Naive thymus-derived CD4-positive, alpha-beta T cell (primary cell): ENCODE measurements at regions of chr11 and their contacts with region 1.

Region 1: DNA sequence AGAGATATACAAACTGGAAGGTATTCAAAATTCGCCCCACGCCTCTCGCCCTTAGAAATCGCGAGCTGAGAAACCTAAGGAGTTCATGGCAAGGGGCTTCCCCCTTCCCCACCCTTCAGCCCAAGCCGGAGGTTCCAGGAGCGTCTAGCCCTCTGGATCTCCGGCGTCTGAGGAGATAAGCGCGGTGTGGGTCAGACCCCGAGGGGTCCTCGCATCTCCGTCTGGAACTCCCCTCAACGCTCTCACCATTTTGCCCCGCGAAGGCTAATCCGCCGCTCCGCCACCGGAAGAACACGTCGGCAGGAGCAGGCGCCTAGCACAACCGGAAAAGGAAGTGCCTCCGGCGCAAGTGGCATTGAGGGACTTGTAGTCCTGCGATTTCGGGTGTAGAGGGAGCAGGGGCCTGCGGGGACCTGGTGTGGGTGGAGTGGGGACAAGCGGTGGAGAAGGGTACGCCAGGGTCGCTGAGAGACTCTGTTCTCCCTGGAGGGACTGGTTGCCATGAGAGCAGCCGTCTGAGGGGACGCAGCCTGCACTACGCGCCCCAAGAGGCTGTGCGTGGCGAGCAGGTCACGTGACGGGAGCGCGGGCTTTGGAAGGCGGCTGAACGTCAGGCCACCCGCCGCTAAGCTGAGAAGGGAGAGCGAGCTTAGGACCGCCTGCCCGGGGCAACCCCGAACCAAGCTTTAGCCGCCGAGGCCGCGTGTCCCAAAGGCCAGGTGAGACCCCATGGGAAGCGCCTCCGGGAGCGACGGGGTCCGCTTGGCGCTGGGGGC is at the starts of genes FEN1 and TMEM258:
- DNase-seq: peak; percentile 82 to 91 (median 88)
- ATAC-seq: peak; percentile 91
- H3K4me3 ChIP-seq: peak within 1 kb of the TSS; percentile 82
- H3K4me3 Mint-ChIP-seq: peak within 1 kb of the TSS; percentile 91 to 99 (median 96)
- H3K27ac ChIP-seq: peak within 1 kb of the TSS; percentile 96
- H3K27ac Mint-ChIP-seq: peak within 1 kb of the TSS; percentile 96 to 100 (median 99)
- H3K4me1 ChIP-seq: peaks cover 9 to 14% of the 10 kb centered on the region in 2 donors
- H3K4me1 Mint-ChIP-seq: peaks cover 14 to 57% (median 34%) of the 10 kb centered on the region in 7 donors
- H3K27me3 ChIP-seq: no peaks in the 10 kb centered on the region
- H3K27me3 Mint-ChIP-seq: no peaks in the 10 kb centered on the region
- total RNA-seq, gene FEN1: 7.6 to 101 (median 7.9) TPM
- total RNA-seq, gene TMEM258: 58.4 to 182 (median 83.3) TPM

Region 2: GRCh38 chr11:61627567-61628445 is 164.7 kb before region 1 on chr11:
- CTCF ChIA-PET with region 1: no interaction called
- POLR2A ChIA-PET with region 1: no interaction called
- intact Hi-C with region 1: no loop called
- DNase-seq: peak in 3 of 9 donors; percentile 4 to 41 (median 13)
- ATAC-seq: peak; percentile 50
- H3K4me3 ChIP-seq: no peak overlapping the region
- H3K4me3 Mint-ChIP-seq: no peak overlapping the region
- H3K27ac ChIP-seq: no peak overlapping the region
- H3K27ac Mint-ChIP-seq: no peak overlapping the region
- H3K4me1 ChIP-seq: no peaks in the 10 kb centered on the region
- H3K4me1 Mint-ChIP-seq: peaks cover 0 to 6% (median 0%) of the 10 kb centered on the region in 7 donors
- H3K27me3 ChIP-seq: no peaks in the 10 kb centered on the region
- H3K27me3 Mint-ChIP-seq: peaks cover 0 to 16% (median 0%) of the 10 kb centered on the region in 5 donors

Region 3: DNA sequence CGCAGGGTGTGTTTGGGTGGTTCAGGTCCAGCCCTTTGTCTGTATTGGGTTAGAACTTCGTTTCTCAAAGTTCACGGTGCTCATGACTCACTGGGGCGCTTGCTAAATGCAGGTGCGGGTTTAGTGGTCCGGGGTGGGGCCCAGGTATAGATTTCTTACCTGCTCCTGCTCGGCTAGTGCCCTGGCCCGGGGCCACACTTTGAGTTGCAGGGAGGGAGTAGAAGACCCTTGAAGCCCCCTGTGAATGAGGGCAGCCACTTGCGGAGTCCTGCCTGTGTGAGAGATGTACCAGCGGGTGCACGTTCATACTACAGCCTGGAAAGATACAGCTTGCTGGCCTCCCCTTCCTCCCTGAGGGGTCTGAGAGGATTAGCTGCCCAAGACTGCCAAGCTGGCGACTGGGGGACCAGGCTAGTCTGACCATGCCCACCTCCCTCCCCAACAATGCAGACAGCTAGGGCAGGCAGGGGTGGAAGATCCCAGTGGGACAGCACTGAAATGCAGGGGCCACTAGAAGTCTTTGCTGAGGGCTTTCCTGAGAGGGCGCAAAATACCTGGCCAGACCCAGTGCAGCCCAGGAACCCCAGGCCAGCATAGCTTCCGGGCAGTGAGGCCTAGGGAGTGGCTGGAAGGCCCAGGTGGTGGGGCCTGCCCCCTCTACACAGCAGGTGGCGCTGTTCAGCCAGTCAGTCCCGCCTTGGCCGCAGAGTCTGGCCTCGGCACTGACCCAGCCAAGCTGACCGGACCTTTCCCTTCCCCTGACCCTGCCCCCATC is 45.1 kb before region 1 on chr11:
- CTCF ChIA-PET with region 1: no interaction called
- POLR2A ChIA-PET with region 1: no interaction called
- intact Hi-C with region 1: loop called in 1 of 2 experiments (anchors 5 kb)
- DNase-seq: peak in 5 of 9 donors; percentile 13 to 67 (median 18)
- ATAC-seq: peak; percentile 65
- H3K4me3 ChIP-seq: no peak overlapping the region
- H3K4me3 Mint-ChIP-seq: no peak overlapping the region
- H3K27ac ChIP-seq: no peak overlapping the region
- H3K27ac Mint-ChIP-seq: no peak overlapping the region
- H3K4me1 ChIP-seq: no peaks in the 10 kb centered on the region
- H3K4me1 Mint-ChIP-seq: peaks cover 0 to 10% (median 6%) of the 10 kb centered on the region in 7 donors
- H3K27me3 ChIP-seq: peaks cover 0 to 3% of the 10 kb centered on the region in 2 donors
- H3K27me3 Mint-ChIP-seq: peaks cover 17 to 22% (median 20%) of the 10 kb centered on the region in 5 donors

Region 4: GRCh38 chr11:61834278-61835048 is 42.0 kb after region 1 on chr11:
- CTCF ChIA-PET with region 1: no interaction called
- POLR2A ChIA-PET with region 1: interaction called, 3 read pairs
- intact Hi-C with region 1: loop called in 1 of 2 experiments (anchors 1 kb)
- DNase-seq: peak in 8 of 9 donors; percentile 17 to 71 (median 37)
- ATAC-seq: peak; percentile 92
- H3K4me3 ChIP-seq: no peak overlapping the region
- H3K4me3 Mint-ChIP-seq: peak overlapping the region in 8 of 10 donors; percentile 4 to 84 (median 48)
- H3K27ac ChIP-seq: peak overlapping the region; percentile 39
- H3K27ac Mint-ChIP-seq: peak overlapping the region in 8 of 9 donors; percentile 32 to 98 (median 78)
- H3K4me1 ChIP-seq: peaks cover 11 to 14% of the 10 kb centered on the region in 2 donors
- H3K4me1 Mint-ChIP-seq: peaks cover 22 to 69% (median 38%) of the 10 kb centered on the region in 7 donors
- H3K27me3 ChIP-seq: no peaks in the 10 kb centered on the region
- H3K27me3 Mint-ChIP-seq: peaks cover 0 to 41% (median 24%) of the 10 kb centered on the region in 5 donors

Region 5: GRCh38 chr11:61967116-61967923 is 174.8 kb after region 1 on chr11 and contains the start of gene FTH1:
- CTCF ChIA-PET with region 1: no interaction called
- POLR2A ChIA-PET with region 1: interaction called, 10 read pairs
- intact Hi-C with region 1: loop called (anchors 1 to 5 kb)
- DNase-seq: peak; percentile 87 to 96 (median 92)
- ATAC-seq: peak; percentile 81
- H3K4me3 ChIP-seq: peak within 1 kb of the TSS; percentile 91
- H3K4me3 Mint-ChIP-seq: peak within 1 kb of the TSS; percentile 90 to 98 (median 94)
- H3K27ac ChIP-seq: peak within 1 kb of the TSS; percentile 87
- H3K27ac Mint-ChIP-seq: peak within 1 kb of the TSS; percentile 91 to 99 (median 97)
- H3K4me1 ChIP-seq: peaks cover 18 to 38% of the 10 kb centered on the region in 2 donors
- H3K4me1 Mint-ChIP-seq: peaks cover 45 to 78% (median 72%) of the 10 kb centered on the region in 7 donors
- H3K27me3 ChIP-seq: no peaks in the 10 kb centered on the region
- H3K27me3 Mint-ChIP-seq: no peaks in the 10 kb centered on the region
- total RNA-seq, gene FTH1: 684 to 3,858 (median 993) TPM

Region 6: GRCh38 chr11:62108017-62108750 is 315.7 kb after region 1 on chr11:
- CTCF ChIA-PET with region 1: interaction called, 50 read pairs
- POLR2A ChIA-PET with region 1: interaction called, 7 read pairs
- intact Hi-C with region 1: loop called (anchors 1 to 2 kb)
- DNase-seq: peak in 7 of 9 donors; percentile 56 to 76 (median 69)
- ATAC-seq: peak; percentile 78
- H3K4me3 ChIP-seq: no peak overlapping the region
- H3K4me3 Mint-ChIP-seq: peak overlapping the region in 1 of 10 donors; percentile 38
- H3K27ac ChIP-seq: no peak overlapping the region
- H3K27ac Mint-ChIP-seq: peak overlapping the region in 3 of 9 donors; percentile 48 to 81 (median 80)
- H3K4me1 ChIP-seq: peaks cover 6 to 7% of the 10 kb centered on the region in 2 donors
- H3K4me1 Mint-ChIP-seq: peaks cover 6 to 27% (median 16%) of the 10 kb centered on the region in 7 donors
- H3K27me3 ChIP-seq: no peaks in the 10 kb centered on the region
- H3K27me3 Mint-ChIP-seq: peaks cover 0 to 15% (median 4%) of the 10 kb centered on the region in 5 donors

Region 7: GRCh38 chr11:62315431-62315830 is 522.9 kb after region 1 on chr11:
- CTCF ChIA-PET with region 1: interaction called, 9 read pairs
- POLR2A ChIA-PET with region 1: no interaction called
- intact Hi-C with region 1: loop called (anchors 1 to 5 kb)
- DNase-seq: no peak
- ATAC-seq: peak; percentile 43
- H3K4me3 ChIP-seq: no peak overlapping the region
- H3K4me3 Mint-ChIP-seq: no peak overlapping the region
- H3K27ac ChIP-seq: no peak overlapping the region
- H3K27ac Mint-ChIP-seq: no peak overlapping the region
- H3K4me1 ChIP-seq: no peaks in the 10 kb centered on the region
- H3K4me1 Mint-ChIP-seq: peaks cover 0 to 16% (median 13%) of the 10 kb centered on the region in 7 donors
- H3K27me3 ChIP-seq: no peaks in the 10 kb centered on the region
- H3K27me3 Mint-ChIP-seq: peaks cover 17 to 55% (median 21%) of the 10 kb centered on the region in 5 donors